ENCODE measurements at regions of chr17 and their contacts with region 1.

Region 1: GRCh38 chr17:50638851-50639767 is 4.4 kb downstream of the ABCC3 start:
- DNase-seq: peak; percentile 58
- ATAC-seq: peak; percentile 1; the same call in 2 of the 3 replicates
- H3K4me3 ChIP-seq: peak overlapping the region in 1 of 3 experiments; percentile 45; a peak in 2 of 6 replicates
- H3K27ac ChIP-seq: peak overlapping the region; percentile 56
- H3K4me1 ChIP-seq: peaks cover 95% of the 10 kb centered on the region
- H3K27me3 ChIP-seq: peaks cover 0 to 3% of the 10 kb centered on the region in 2 experiments; a peak in 2 of 5 replicates
- CTCF ChIP-seq: no peak
- EP300 ChIP-seq: no peak; a peak in 1 of 4 replicates
- POLR2A ChIP-seq: no peak
- RAD21 ChIP-seq: no peak

Region 2: GRCh38 chr17:50498021-50498874 is 140.9 kb before region 1 on chr17:
- CTCF ChIA-PET with region 1: no interaction called
- POLR2A ChIA-PET with region 1: no interaction called
- in situ Hi-C with region 1: no loop called
- intact Hi-C with region 1: no loop called
- DNase-seq: no peak
- ATAC-seq: no peak; the same call in 2 of the 3 replicates
- H3K4me3 ChIP-seq: no peak overlapping the region
- H3K27ac ChIP-seq: no peak overlapping the region
- H3K4me1 ChIP-seq: peaks cover 14% of the 10 kb centered on the region
- H3K27me3 ChIP-seq: no peaks in the 10 kb centered on the region; a peak in 4 of 5 replicates
- CTCF ChIP-seq: no peak
- EP300 ChIP-seq: no peak
- POLR2A ChIP-seq: no peak
- RAD21 ChIP-seq: no peak

Region 3: GRCh38 chr17:50668025-50668837 is 29.1 kb after region 1 on chr17:
- CTCF ChIA-PET with region 1: no interaction called
- POLR2A ChIA-PET with region 1: interaction called, 10 read pairs
- in situ Hi-C with region 1: no loop called
- intact Hi-C with region 1: no loop called
- DNase-seq: no peak
- ATAC-seq: peak; percentile 15
- H3K4me3 ChIP-seq: 0 out of 6 replicates have a peak overlapping the region, but pooled peaks of 1 of the 3 experiments have one; percentile 5
- H3K27ac ChIP-seq: peak overlapping the region; percentile 19
- H3K4me1 ChIP-seq: peaks cover 70% of the 10 kb centered on the region
- H3K27me3 ChIP-seq: no peaks in the 10 kb centered on the region
- CTCF ChIP-seq: no peak
- EP300 ChIP-seq: no peak
- POLR2A ChIP-seq: no peak
- RAD21 ChIP-seq: no peak

Measured in HepG2 (cell line).